CD8-positive, alpha-beta T cell (primary cell): ENCODE measurements at regions of chr11 and their contacts with region 1.

Region 1: DNA sequence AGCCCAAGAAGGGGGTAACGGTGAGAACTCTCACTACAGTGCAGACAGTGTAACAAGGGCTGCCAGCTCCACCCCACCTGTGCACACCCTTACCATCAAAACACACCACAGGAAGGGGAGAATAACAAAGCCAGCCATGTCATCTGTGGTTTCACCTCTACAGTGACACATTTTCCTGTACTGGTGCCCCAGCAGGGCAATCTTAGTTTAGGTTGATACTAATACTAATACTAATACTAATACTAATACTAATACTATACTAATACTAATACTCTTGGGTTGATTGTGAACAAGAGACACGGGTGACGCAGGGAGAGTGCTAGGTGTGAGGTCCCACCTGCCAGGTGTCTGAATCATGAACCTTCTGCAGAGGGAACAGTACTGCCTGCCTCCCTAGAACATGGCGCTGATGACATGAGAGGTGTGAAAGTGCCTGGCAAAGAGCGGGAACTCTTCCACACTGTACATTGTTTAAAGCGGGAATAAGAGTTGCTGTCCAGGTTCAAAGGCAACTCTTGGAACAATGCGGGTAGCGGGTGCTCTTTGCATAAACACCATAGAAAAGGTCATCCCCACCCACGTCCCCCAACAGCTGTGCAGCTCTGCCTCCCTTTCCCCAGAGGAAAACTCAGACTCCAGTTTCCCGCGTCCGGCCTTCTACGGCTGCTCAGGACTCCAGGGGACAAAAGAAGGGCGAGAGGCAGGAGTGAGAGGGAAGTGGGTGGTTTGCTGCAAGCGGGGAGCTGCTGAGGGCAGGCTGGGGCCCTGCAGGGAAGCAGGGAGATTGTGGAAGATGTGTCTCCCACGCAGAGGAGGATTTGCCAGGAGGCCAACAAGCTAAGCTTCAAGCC is 25.0 kb upstream of the TMPRSS4 start:
- DNase-seq: peak; percentile 55 to 93 (median 77)
- ATAC-seq: peak; percentile 92
- H3K4me3 ChIP-seq: peak overlapping the region in 1 of 2 experiments; percentile 20
- H3K4me3 Mint-ChIP-seq: peak overlapping the region; percentile 67
- H3K27ac ChIP-seq: peak overlapping the region; percentile 49 to 69
- H3K27ac Mint-ChIP-seq: peak overlapping the region; percentile 98
- H3K4me1 ChIP-seq: peaks cover 59% of the 10 kb centered on the region
- H3K4me1 Mint-ChIP-seq: peaks cover 58% of the 10 kb centered on the region
- H3K27me3 ChIP-seq: no peaks in the 10 kb centered on the region
- H3K27me3 Mint-ChIP-seq: no peaks in the 10 kb centered on the region
- CTCF ChIP-seq: no peak

Region 2: GRCh38 chr11:117817368-117818040 is 234.3 kb before region 1 on chr11:
- CTCF ChIA-PET with region 1: interaction called, 111 read pairs
- POLR2A ChIA-PET with region 1: interaction called, 12 read pairs
- intact Hi-C with region 1: loop called in 1 of 2 experiments (anchors 1 kb)
- DNase-seq: peak; percentile 73 to 90 (median 85)
- ATAC-seq: peak; percentile 24
- H3K4me3 ChIP-seq: no peak overlapping the region
- H3K4me3 Mint-ChIP-seq: no peak overlapping the region
- H3K27ac ChIP-seq: peak overlapping the region in 1 of 2 experiments; percentile 83
- H3K27ac Mint-ChIP-seq: peak overlapping the region; percentile 80
- H3K4me1 ChIP-seq: peaks cover 60% of the 10 kb centered on the region
- H3K4me1 Mint-ChIP-seq: peaks cover 59% of the 10 kb centered on the region
- H3K27me3 ChIP-seq: no peaks in the 10 kb centered on the region
- H3K27me3 Mint-ChIP-seq: no peaks in the 10 kb centered on the region
- CTCF ChIP-seq: peak; percentile 96

Region 3: DNA sequence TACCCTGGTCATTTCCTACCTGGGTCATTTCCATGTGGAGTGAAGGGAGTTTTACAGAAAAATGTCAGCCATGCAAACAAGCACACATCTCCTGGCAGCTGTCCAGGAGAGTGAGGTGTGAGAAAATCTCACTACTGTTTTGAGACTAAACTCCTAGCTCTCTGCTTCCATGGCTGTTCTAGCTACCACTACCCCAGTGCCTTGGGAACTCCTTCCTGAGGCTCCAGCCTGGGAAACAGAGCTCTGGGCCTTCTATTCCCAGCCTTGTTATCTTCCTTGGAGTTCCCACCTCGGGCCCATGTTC is 119.8 kb before region 1 on chr11:
- CTCF ChIA-PET with region 1: interaction called, 15 read pairs
- POLR2A ChIA-PET with region 1: interaction called, 8 read pairs
- intact Hi-C with region 1: no loop called
- DNase-seq: peak in 6 of 9 experiments; percentile 32 to 73 (median 56)
- ATAC-seq: no peak
- H3K4me3 ChIP-seq: no peak overlapping the region
- H3K4me3 Mint-ChIP-seq: no peak overlapping the region
- H3K27ac ChIP-seq: peak overlapping the region in 1 of 2 experiments; percentile 65
- H3K27ac Mint-ChIP-seq: peak overlapping the region; percentile 91
- H3K4me1 ChIP-seq: peaks cover 52% of the 10 kb centered on the region
- H3K4me1 Mint-ChIP-seq: peaks cover 56% of the 10 kb centered on the region
- H3K27me3 ChIP-seq: no peaks in the 10 kb centered on the region
- H3K27me3 Mint-ChIP-seq: no peaks in the 10 kb centered on the region
- CTCF ChIP-seq: no peak

Region 4: GRCh38 chr11:117985953-117986887 is 65.6 kb before region 1 on chr11 and contains the start of gene IL10RA:
- CTCF ChIA-PET with region 1: interaction called, 270 read pairs
- POLR2A ChIA-PET with region 1: interaction called, 84 read pairs
- intact Hi-C with region 1: loop called (anchors 1 kb)
- DNase-seq: peak; percentile 66 to 92 (median 80)
- ATAC-seq: peak; percentile 75
- H3K4me3 ChIP-seq: peak within 1 kb of the TSS; percentile 81 to 100
- H3K4me3 Mint-ChIP-seq: peak within 1 kb of the TSS; percentile 89
- H3K27ac ChIP-seq: peak within 1 kb of the TSS; percentile 88
- H3K27ac Mint-ChIP-seq: peak within 1 kb of the TSS; percentile 92
- H3K4me1 ChIP-seq: peaks cover 57% of the 10 kb centered on the region
- H3K4me1 Mint-ChIP-seq: peaks cover 72% of the 10 kb centered on the region
- H3K27me3 ChIP-seq: no peaks in the 10 kb centered on the region
- H3K27me3 Mint-ChIP-seq: no peaks in the 10 kb centered on the region
- CTCF ChIP-seq: no peak
- total RNA-seq, gene IL10RA: 295 to 299 TPM

Region 5: GRCh38 chr11:118021146-118021545 is 30.7 kb before region 1 on chr11:
- CTCF ChIA-PET with region 1: interaction called, 27 read pairs
- POLR2A ChIA-PET with region 1: interaction called, 16 read pairs
- intact Hi-C with region 1: no loop called
- DNase-seq: no peak
- ATAC-seq: no peak
- H3K4me3 ChIP-seq: no peak overlapping the region
- H3K4me3 Mint-ChIP-seq: no peak overlapping the region
- H3K27ac ChIP-seq: no peak overlapping the region
- H3K27ac Mint-ChIP-seq: no peak overlapping the region
- H3K4me1 ChIP-seq: peaks cover 13% of the 10 kb centered on the region
- H3K4me1 Mint-ChIP-seq: peaks cover 32% of the 10 kb centered on the region
- H3K27me3 ChIP-seq: no peaks in the 10 kb centered on the region
- H3K27me3 Mint-ChIP-seq: no peaks in the 10 kb centered on the region
- CTCF ChIP-seq: no peak

Region 6: DNA sequence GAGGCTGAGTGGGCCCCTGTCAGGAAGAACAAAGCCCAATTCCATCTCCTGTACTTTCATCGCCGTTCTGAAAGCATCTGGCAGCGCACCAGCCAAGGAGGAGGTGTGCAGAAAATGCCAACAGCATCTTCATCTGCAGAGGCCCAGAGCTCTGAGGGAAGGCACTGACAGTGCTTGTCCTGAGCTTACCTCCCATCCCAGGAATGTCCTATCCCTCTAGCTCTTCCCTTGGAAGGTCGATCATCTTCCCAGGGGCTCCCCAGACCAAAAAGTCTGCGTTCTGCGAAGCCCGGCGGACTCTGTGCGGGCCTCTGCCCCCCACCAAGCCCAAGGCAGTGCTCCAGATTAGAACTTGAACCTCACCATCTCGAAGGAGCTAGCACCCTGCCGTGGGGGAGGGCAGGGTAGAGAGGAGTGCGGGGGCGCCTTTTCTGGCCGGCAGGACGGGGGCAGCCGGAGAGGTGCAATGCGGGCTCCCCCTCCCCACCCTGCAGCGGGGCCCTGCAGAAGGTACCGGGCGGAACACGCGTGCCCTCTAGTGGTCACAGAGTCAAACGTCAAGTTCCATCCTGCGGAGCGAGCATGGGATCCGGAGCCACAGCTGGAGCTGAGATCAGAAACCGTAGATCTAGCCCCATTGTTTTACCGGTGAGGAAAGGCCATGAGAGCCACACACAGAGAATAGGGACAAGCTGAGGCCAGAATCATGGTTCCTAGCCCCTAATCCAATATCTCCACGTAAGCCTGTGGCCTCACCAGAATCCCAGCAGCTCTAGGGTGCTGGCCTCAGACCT is 119.6 kb after region 1 on chr11:
- CTCF ChIA-PET with region 1: interaction called, 15 read pairs
- POLR2A ChIA-PET with region 1: no interaction called
- intact Hi-C with region 1: no loop called
- DNase-seq: peak; percentile 45 to 83 (median 72)
- ATAC-seq: peak; percentile 96
- H3K4me3 ChIP-seq: no peak overlapping the region
- H3K4me3 Mint-ChIP-seq: no peak overlapping the region
- H3K27ac ChIP-seq: no peak overlapping the region
- H3K27ac Mint-ChIP-seq: no peak overlapping the region
- H3K4me1 ChIP-seq: peaks cover 8% of the 10 kb centered on the region
- H3K4me1 Mint-ChIP-seq: peaks cover 2% of the 10 kb centered on the region
- H3K27me3 ChIP-seq: no peaks in the 10 kb centered on the region
- H3K27me3 Mint-ChIP-seq: peaks cover 3% of the 10 kb centered on the region
- CTCF ChIP-seq: peak; percentile 95